ENCODE measurements at regions of chr17 and their contacts with region 1.

Region 1: DNA sequence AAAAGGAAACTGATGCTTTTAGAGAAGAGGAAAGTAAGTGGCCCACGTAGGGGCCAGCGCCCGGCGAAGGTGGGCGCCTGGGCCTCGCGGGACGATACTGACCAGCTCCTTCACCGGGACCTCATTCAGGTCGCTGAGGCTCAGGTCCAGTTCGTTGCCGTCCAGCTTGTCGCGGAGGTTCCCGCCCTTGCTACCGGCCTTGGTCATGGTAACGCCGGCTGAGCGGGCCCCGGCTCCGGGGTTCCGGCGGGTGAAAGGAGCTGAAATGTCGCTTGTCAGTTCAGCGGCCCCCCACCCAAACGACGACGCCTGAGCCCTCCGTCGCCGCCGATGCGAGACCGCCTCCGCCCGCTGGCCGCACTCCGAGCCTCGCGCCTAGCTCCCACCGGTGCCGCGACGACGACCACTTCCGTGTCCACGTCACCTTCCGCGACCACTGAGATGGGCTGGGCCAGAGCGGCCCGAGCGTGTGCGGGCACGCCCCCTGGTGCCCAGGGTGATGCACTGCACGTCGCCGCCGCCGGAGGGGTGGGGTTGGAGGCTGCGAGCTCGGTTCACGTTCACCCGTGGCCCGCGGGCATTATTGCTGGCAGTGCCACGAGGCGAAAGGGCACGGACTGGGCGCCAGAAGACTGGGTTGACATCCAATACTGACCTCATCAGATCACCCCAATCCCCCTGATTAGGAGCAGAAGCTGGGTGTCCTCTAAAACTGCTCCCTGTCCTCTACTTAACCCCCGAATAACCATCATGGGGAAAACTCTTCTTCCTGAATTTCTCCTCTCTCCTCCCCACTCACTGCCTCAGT is at the start of gene LRRC59:
- DNase-seq: peak; percentile 94
- CTCF ChIP-seq: peak; percentile 100

Region 2: GRCh38 chr17:50345432-50346312 is 51.6 kb before region 1 on chr17 and contains the start of gene XYLT2:
- CTCF ChIA-PET with region 1: interaction called, 20 read pairs
- POLR2A ChIA-PET with region 1: no interaction called
- DNase-seq: peak; percentile 99
- CTCF ChIP-seq: no peak

Region 3: GRCh38 chr17:50361561-50362480 is 35.5 kb before region 1 on chr17:
- CTCF ChIA-PET with region 1: interaction called, 59 read pairs
- POLR2A ChIA-PET with region 1: no interaction called
- DNase-seq: peak; percentile 85
- CTCF ChIP-seq: peak; percentile 66

Region 4: DNA sequence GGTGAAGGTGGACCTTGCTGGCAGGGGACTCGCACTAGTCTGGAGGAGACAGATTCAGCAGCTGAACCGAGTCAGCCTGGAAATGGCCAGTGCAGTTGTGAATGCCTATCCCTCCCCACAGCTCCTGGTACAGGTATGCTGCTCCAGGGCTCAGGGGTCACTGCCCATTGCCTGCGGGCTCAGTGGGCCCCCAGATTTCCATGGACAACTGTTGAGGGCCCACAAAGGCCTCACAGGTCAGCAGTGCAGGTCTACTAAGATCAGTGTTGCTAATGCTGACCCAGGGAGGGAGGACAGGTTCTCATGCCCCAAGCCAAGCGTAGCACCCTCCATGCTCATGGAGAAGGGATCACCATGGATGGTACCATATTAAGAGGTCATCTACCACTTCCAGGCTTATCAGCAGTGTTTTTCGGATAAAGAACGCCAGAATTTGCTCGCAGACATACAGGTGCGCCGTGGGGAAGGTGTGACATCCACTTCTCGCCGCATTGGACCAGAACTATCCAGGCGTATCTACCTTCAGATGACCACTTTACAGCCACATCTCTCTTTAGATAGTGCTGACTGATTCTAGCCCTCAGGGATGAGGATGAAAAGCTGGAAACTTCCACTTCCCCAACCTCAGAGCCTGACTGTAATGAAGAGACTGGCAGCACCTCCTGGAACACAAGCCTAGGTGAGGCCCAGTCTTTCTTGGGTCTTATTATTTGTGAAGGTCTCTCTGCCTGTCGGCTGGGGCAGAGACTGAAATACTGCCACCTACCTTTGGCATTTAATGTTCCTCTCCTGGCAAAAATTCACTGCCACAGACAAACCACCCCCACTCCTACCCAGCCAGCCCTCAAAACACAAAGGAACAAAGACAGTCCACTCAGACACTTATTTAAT is 16.7 kb before region 1 on chr17:
- CTCF ChIA-PET with region 1: interaction called, 57 read pairs
- POLR2A ChIA-PET with region 1: interaction called, 5 read pairs
- DNase-seq: no peak
- CTCF ChIP-seq: peak; percentile 18

Region 5: GRCh38 chr17:50412188-50412732 is 14.9 kb after region 1 on chr17:
- CTCF ChIA-PET with region 1: interaction called, 38 read pairs
- POLR2A ChIA-PET with region 1: no interaction called
- DNase-seq: no peak
- CTCF ChIP-seq: no peak

Region 6: DNA sequence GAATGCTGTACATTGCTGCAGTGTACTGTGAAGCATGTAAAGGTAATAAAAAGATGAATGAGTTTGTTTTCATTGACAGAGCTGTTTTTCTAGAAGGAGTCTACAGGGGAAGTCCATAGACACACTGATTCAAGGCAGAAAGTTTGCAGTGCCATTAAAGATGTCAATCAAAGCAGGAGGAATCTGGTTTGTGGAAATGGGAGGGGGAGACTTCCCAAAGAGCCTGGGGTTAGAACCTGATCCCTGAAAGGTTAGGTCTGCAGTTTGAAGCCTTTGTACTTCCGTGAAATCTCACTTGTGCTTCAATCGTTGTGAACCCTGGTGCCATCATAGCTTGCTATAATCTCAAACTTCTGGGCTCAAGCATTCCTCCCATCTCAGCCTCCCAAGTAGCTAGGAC is 33.9 kb after region 1 on chr17:
- CTCF ChIA-PET with region 1: interaction called, 31 read pairs
- POLR2A ChIA-PET with region 1: no interaction called
- DNase-seq: no peak
- CTCF ChIP-seq: no peak

Region 7: GRCh38 chr17:50478391-50479381 is 81.4 kb after region 1 on chr17 and contains the start of gene RSAD1:
- CTCF ChIA-PET with region 1: interaction called, 19 read pairs
- POLR2A ChIA-PET with region 1: no interaction called
- DNase-seq: peak; percentile 90
- CTCF ChIP-seq: peak; percentile 85

Region 8: GRCh38 chr17:50613007-50613992 is 216.0 kb after region 1 on chr17:
- CTCF ChIA-PET with region 1: no interaction called
- POLR2A ChIA-PET with region 1: no interaction called
- DNase-seq: no peak
- CTCF ChIP-seq: no peak